IMR-90 (cell line): ENCODE measurements at regions of chr12 and their contacts with region 1.

Region 1: GRCh38 chr12:65169320-65170208 is at the start of gene LEMD3:
- DNase-seq: peak; percentile 85
- ATAC-seq: peak; percentile 93
- H3K4me3 ChIP-seq: peak within 1 kb of the TSS; percentile 89
- H3K27ac ChIP-seq: peak within 1 kb of the TSS; percentile 92
- H3K4me1 ChIP-seq: peaks cover 2% of the 10 kb centered on the region; the same call in 1 of the 2 replicates
- H3K27me3 ChIP-seq: no peaks in the 10 kb centered on the region; the same call in 1 of the 2 replicates
- CTCF ChIP-seq: 0 out of 2 replicates have a peak, but pooled peaks have one; percentile 0
- POLR2A ChIP-seq: peak; percentile 96
- RAD21 ChIP-seq: no peak
- total RNA-seq, gene LEMD3: 9.9 and 20.3 TPM in 2 replicates

Region 2: GRCh38 chr12:65278576-65279368 is 109.2 kb after region 1 on chr12 and contains the start of gene MSRB3:
- CTCF ChIA-PET with region 1: no interaction called
- POLR2A ChIA-PET with region 1: no interaction called
- dilution Hi-C with region 1: no loop called
- in situ Hi-C with region 1: no loop called
- intact Hi-C with region 1: loop called (anchors 5 kb)
- DNase-seq: peak; percentile 70
- ATAC-seq: peak; percentile 90
- H3K4me3 ChIP-seq: peak within 1 kb of the TSS; percentile 99
- H3K27ac ChIP-seq: peak within 1 kb of the TSS; percentile 100
- H3K4me1 ChIP-seq: peaks cover 7% of the 10 kb centered on the region
- H3K27me3 ChIP-seq: no peaks in the 10 kb centered on the region
- CTCF ChIP-seq: no peak
- POLR2A ChIP-seq: no peak; the same call in 1 of the 2 replicates
- RAD21 ChIP-seq: no peak
- total RNA-seq, gene MSRB3: 31.7 and 40.8 TPM in 2 replicates